ENCODE measurements at regions of chr16 and their contacts with region 1.

Region 1: GRCh38 chr16:75224306-75225091 is 5.7 kb downstream of the CTRB1 start:
- DNase-seq: no peak
- H3K4me3 ChIP-seq: no peak overlapping the region
- H3K27ac ChIP-seq: no peak overlapping the region
- H3K4me1 ChIP-seq: peaks cover 3% of the 10 kb centered on the region
- H3K27me3 ChIP-seq: no peaks in the 10 kb centered on the region
- CTCF ChIP-seq: no peak
- POLR2A ChIP-seq: no peak

Region 2: DNA sequence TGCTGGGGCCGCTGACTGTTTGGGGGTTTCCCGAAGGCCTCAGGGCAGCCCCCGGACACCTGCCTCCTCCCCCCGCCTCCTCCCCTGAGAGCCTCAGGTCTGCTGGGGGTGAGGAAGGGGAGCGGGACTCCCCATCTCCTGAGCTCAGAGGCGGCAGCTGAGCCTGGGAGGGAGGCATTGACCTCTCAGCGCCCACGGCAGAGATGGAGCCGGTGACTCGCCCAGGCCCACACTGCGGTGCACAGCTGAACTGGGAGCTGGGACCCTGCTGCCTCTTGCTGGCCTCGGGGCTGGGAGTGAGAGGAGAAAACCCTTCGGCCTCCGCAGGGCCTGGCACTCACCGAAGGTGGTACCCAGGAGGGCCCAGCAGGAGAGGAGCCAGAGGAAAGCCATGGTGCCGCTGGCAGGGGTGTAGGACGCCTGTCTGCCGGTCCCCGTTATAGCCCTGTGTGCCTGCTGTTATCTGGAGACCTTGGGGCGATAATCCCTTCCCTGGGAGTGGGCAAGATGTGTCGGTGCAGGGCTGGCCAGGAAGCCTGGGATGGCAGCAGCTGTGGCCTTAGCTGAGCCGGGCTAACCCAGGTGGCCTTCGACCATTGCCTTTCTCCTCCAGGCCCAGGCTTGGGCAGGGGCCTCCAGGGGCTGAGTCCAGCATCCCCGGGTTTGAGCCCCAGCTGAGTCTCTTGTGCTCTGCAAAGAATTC is 17.6 kb before region 1 on chr16 and contains the start of gene CTRB2:
- intact Hi-C with region 1: loop called (anchors 2 kb)
- DNase-seq: no peak
- H3K4me3 ChIP-seq: no peak within 1 kb of the TSS
- H3K27ac ChIP-seq: no peak within 1 kb of the TSS
- H3K4me1 ChIP-seq: no peaks in the 10 kb centered on the region
- H3K27me3 ChIP-seq: no peaks in the 10 kb centered on the region
- CTCF ChIP-seq: no peak
- POLR2A ChIP-seq: no peak
- total RNA-seq, gene CTRB2: 0.63 to 1.1 TPM

Measured in testis (tissue), 5 donors.